ENCODE measurements at regions of chr1 and their contacts with region 1.

Region 1: GRCh38 chr1:40204856-40205255 is 42.9 kb upstream of the TMCO2 start:
- DNase-seq: no peak
- H3K4me3 ChIP-seq: no peak overlapping the region
- H3K27ac ChIP-seq: no peak overlapping the region
- H3K4me1 ChIP-seq: no peaks in the 10 kb centered on the region
- H3K27me3 ChIP-seq: no peaks in the 10 kb centered on the region
- CTCF ChIP-seq: no peak

Region 2: GRCh38 chr1:40224040-40224439 is 19.2 kb after region 1 on chr1:
- CTCF ChIA-PET with region 1: no interaction called
- POLR2A ChIA-PET with region 1: interaction called, 14 read pairs
- intact Hi-C with region 1: no loop called
- DNase-seq: peak; percentile 37
- H3K4me3 ChIP-seq: no peak overlapping the region
- H3K27ac ChIP-seq: no peak overlapping the region
- H3K4me1 ChIP-seq: no peaks in the 10 kb centered on the region
- H3K27me3 ChIP-seq: no peaks in the 10 kb centered on the region
- CTCF ChIP-seq: no peak

Measured in A673 (cell line).